Naive thymus-derived CD4-positive, alpha-beta T cell (primary cell): ENCODE measurements at regions of chr6 and their contacts with region 1.

Region 1: DNA sequence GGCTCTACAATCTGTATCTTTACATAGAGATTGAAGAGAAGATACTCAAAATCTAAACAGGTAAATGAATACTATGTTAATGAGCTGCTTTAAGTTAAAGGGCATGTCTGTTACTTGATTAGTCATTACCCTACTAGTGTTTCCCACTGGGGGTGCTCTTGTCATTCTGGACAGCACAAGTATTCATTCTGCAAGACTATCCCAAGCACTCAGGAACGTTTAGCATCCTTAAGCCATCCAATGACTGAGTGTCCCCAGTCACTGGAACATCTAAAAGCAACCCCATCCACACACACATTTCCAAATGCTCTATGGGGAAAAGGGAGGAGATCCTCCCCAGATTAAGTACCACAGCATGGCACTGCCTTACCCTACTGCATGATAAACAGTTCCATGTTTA is 25.7 kb downstream of the EZR start:
- DNase-seq: peak in 3 of 9 donors; percentile 29 to 39 (median 36)
- ATAC-seq: peak; percentile 56
- H3K4me3 ChIP-seq: no peak overlapping the region
- H3K4me3 Mint-ChIP-seq: peak overlapping the region in 1 of 10 donors; percentile 29
- H3K27ac ChIP-seq: no peak overlapping the region
- H3K27ac Mint-ChIP-seq: peak overlapping the region in 5 of 9 donors; percentile 25 to 82 (median 79)
- H3K4me1 ChIP-seq: peaks cover 19 to 77% of the 10 kb centered on the region in 2 donors
- H3K4me1 Mint-ChIP-seq: peaks cover 47 to 87% (median 80%) of the 10 kb centered on the region in 7 donors
- H3K27me3 ChIP-seq: no peaks in the 10 kb centered on the region
- H3K27me3 Mint-ChIP-seq: no peaks in the 10 kb centered on the region

Region 2: DNA sequence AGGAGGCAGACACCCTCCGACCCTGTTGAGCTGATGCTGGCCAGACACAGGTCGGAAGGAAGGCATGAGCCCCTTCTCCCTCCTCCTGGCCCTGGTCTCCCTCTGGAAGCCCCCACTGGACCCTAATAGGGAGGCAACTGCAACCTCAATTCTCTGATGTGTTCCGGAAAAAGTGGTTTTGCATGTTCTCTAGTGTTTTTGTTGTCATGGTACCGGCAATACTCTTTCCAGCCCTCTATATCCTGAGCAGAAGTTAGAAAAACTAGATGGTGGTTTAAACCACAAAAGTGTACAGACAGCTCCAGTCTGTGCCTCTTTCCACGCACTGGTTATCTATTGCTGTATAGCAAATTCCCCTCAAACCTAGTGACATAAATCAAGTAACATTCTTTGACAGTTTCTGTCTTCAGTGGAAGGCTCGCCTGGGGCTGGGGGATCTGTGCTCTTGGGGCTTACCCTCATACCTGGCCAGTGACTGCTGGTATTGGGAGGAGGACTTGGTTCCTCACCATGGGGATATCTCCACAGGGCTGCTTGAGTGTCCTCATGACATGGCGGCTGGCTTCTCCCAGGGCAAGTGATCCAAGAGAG is 106.5 kb before region 1 on chr6:
- CTCF ChIA-PET with region 1: interaction called, 6 read pairs
- POLR2A ChIA-PET with region 1: interaction called, 14 read pairs
- intact Hi-C with region 1: no loop called
- DNase-seq: peak; percentile 29 to 92 (median 87)
- ATAC-seq: peak; percentile 96
- H3K4me3 ChIP-seq: peak overlapping the region; percentile 31
- H3K4me3 Mint-ChIP-seq: peak overlapping the region; percentile 66 to 91 (median 79)
- H3K27ac ChIP-seq: peak overlapping the region; percentile 82
- H3K27ac Mint-ChIP-seq: peak overlapping the region; percentile 88 to 100 (median 98)
- H3K4me1 ChIP-seq: peaks cover 28 to 49% of the 10 kb centered on the region in 2 donors
- H3K4me1 Mint-ChIP-seq: peaks cover 36 to 76% (median 70%) of the 10 kb centered on the region in 7 donors
- H3K27me3 ChIP-seq: no peaks in the 10 kb centered on the region
- H3K27me3 Mint-ChIP-seq: no peaks in the 10 kb centered on the region

Region 3: DNA sequence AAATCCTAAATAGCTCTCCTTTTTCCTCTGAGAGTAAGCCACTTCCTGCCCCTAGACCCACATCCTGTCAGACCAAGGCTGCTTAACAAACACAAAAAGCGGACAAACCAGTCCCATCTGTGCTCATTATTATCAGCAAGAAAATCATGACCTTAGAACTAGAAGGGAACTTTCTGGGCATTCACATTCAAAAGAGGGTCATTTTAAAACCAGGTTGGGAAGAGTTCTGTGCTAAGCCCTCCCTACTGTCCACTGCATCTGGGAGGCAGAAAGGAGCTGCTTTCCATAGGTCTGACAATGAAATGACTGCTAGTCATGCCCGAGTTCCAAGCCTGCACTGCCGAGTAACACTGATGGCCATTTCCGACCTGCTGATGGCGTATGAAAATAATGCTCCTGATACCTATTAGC is 10.3 kb after region 1 on chr6:
- CTCF ChIA-PET with region 1: interaction called, 10 read pairs
- POLR2A ChIA-PET with region 1: interaction called, 11 read pairs
- intact Hi-C with region 1: loop called in 1 of 2 experiments (anchors 1 kb)
- DNase-seq: peak in 7 of 9 donors; percentile 40 to 67 (median 60)
- ATAC-seq: peak; percentile 55
- H3K4me3 ChIP-seq: peak overlapping the region; percentile 37
- H3K4me3 Mint-ChIP-seq: peak overlapping the region; percentile 72 to 94 (median 81)
- H3K27ac ChIP-seq: peak overlapping the region; percentile 77
- H3K27ac Mint-ChIP-seq: peak overlapping the region; percentile 72 to 94 (median 82)
- H3K4me1 ChIP-seq: peaks cover 76 to 92% of the 10 kb centered on the region in 2 donors
- H3K4me1 Mint-ChIP-seq: peaks cover 57 to 98% (median 92%) of the 10 kb centered on the region in 7 donors
- H3K27me3 ChIP-seq: no peaks in the 10 kb centered on the region
- H3K27me3 Mint-ChIP-seq: no peaks in the 10 kb centered on the region

Region 4: GRCh38 chr6:158819213-158819909 is 25.9 kb after region 1 on chr6 and contains the start of gene EZR:
- CTCF ChIA-PET with region 1: interaction called, 4 read pairs
- POLR2A ChIA-PET with region 1: interaction called, 10 read pairs
- intact Hi-C with region 1: loop called (anchors 1 kb)
- DNase-seq: peak; percentile 70 to 85 (median 80)
- ATAC-seq: peak; percentile 80
- H3K4me3 ChIP-seq: peak within 1 kb of the TSS; percentile 50
- H3K4me3 Mint-ChIP-seq: peak within 1 kb of the TSS; percentile 81 to 97 (median 90)
- H3K27ac ChIP-seq: peak within 1 kb of the TSS; percentile 99
- H3K27ac Mint-ChIP-seq: peak within 1 kb of the TSS; percentile 89 to 97 (median 91)
- H3K4me1 ChIP-seq: peaks cover 21 to 24% of the 10 kb centered on the region in 2 donors
- H3K4me1 Mint-ChIP-seq: peaks cover 30 to 47% (median 36%) of the 10 kb centered on the region in 7 donors
- H3K27me3 ChIP-seq: no peaks in the 10 kb centered on the region
- H3K27me3 Mint-ChIP-seq: no peaks in the 10 kb centered on the region
- total RNA-seq, gene EZR: 132 to 201 (median 163) TPM

Region 5: GRCh38 chr6:158920311-158920915 is 127.0 kb after region 1 on chr6:
- CTCF ChIA-PET with region 1: no interaction called
- POLR2A ChIA-PET with region 1: no interaction called
- intact Hi-C with region 1: no loop called
- DNase-seq: no peak
- ATAC-seq: no peak
- H3K4me3 ChIP-seq: no peak overlapping the region
- H3K4me3 Mint-ChIP-seq: no peak overlapping the region
- H3K27ac ChIP-seq: no peak overlapping the region
- H3K27ac Mint-ChIP-seq: no peak overlapping the region
- H3K4me1 ChIP-seq: peaks cover 8 to 13% of the 10 kb centered on the region in 2 donors
- H3K4me1 Mint-ChIP-seq: peaks cover 5 to 18% (median 14%) of the 10 kb centered on the region in 7 donors
- H3K27me3 ChIP-seq: no peaks in the 10 kb centered on the region
- H3K27me3 Mint-ChIP-seq: no peaks in the 10 kb centered on the region

Region 6: GRCh38 chr6:158958504-158959386 is 165.3 kb after region 1 on chr6:
- CTCF ChIA-PET with region 1: interaction called, 11 read pairs
- POLR2A ChIA-PET with region 1: no interaction called
- intact Hi-C with region 1: loop called in 1 of 2 experiments (anchors 1 kb)
- DNase-seq: peak in 5 of 9 donors; percentile 14 to 30 (median 22)
- ATAC-seq: peak; percentile 64
- H3K4me3 ChIP-seq: no peak overlapping the region
- H3K4me3 Mint-ChIP-seq: no peak overlapping the region
- H3K27ac ChIP-seq: no peak overlapping the region
- H3K27ac Mint-ChIP-seq: peak overlapping the region in 1 of 9 donors; percentile 40
- H3K4me1 ChIP-seq: no peaks in the 10 kb centered on the region
- H3K4me1 Mint-ChIP-seq: peaks cover 0 to 13% (median 0%) of the 10 kb centered on the region in 7 donors
- H3K27me3 ChIP-seq: no peaks in the 10 kb centered on the region
- H3K27me3 Mint-ChIP-seq: peaks cover 0 to 4% (median 0%) of the 10 kb centered on the region in 5 donors